ENCODE measurements at regions of chr6 and their contacts with region 1.

Region 1: GRCh38 chr6:63598049-63599036 is 26.1 kb downstream of the LOC128125822 start:
- DNase-seq: peak; percentile 69 to 80 (median 78)
- H3K4me3 ChIP-seq: peak overlapping the region; percentile 38 to 94 (median 73)
- H3K27ac ChIP-seq: no peak overlapping the region
- H3K4me1 ChIP-seq: peaks cover 6 to 10% (median 8%) of the 10 kb centered on the region in 4 experiments
- H3K27me3 ChIP-seq: no peaks in the 10 kb centered on the region

Region 2: DNA sequence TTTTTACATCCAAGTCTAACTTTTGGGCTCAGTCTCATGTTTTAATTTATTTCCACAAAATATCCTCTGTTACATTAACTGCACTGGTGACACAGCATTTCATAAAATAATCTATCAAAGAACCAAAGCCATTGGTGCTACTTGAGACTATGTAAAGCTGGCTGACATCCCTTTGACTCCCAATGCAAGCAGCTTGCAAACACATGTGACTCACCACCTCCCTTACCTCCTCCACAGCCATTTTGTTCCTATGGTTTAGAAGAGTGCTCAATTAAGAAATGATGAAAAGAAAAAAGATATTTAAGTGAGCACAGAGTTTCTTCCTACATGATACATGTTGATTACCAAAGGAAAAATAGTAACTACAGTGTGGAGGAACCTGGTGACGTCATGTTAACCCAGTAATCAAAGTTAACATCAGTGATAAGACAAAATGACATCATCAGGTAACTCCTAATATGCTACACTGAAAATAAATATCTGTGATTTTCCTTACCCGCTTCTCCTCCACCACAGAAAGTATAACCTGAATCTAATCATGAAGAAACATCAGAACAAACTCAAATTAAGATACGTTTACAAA is 225.3 kb before region 1 on chr6:
- CTCF ChIA-PET with region 1: no interaction called
- POLR2A ChIA-PET with region 1: no interaction called
- DNase-seq: no peak
- H3K4me3 ChIP-seq: no peak overlapping the region
- H3K27ac ChIP-seq: no peak overlapping the region
- H3K4me1 ChIP-seq: no peaks in the 10 kb centered on the region
- H3K27me3 ChIP-seq: no peaks in the 10 kb centered on the region

Region 3: GRCh38 chr6:63553208-63553607 is 45.1 kb before region 1 on chr6:
- CTCF ChIA-PET with region 1: no interaction called
- POLR2A ChIA-PET with region 1: no interaction called
- DNase-seq: no peak
- H3K4me3 ChIP-seq: no peak overlapping the region
- H3K27ac ChIP-seq: no peak overlapping the region
- H3K4me1 ChIP-seq: no peaks in the 10 kb centered on the region
- H3K27me3 ChIP-seq: no peaks in the 10 kb centered on the region

Region 4: GRCh38 chr6:63565058-63565726 is 33.2 kb before region 1 on chr6:
- CTCF ChIA-PET with region 1: no interaction called
- POLR2A ChIA-PET with region 1: no interaction called
- DNase-seq: no peak
- H3K4me3 ChIP-seq: no peak overlapping the region
- H3K27ac ChIP-seq: no peak overlapping the region
- H3K4me1 ChIP-seq: peaks cover 0 to 2% (median 0%) of the 10 kb centered on the region in 4 experiments
- H3K27me3 ChIP-seq: no peaks in the 10 kb centered on the region

Region 5: GRCh38 chr6:63635588-63636517 is 37.5 kb after region 1 on chr6 and contains the start of gene PHF3:
- CTCF ChIA-PET with region 1: interaction called, 13 read pairs
- POLR2A ChIA-PET with region 1: interaction called, 5 read pairs
- DNase-seq: peak; percentile 93 to 96 (median 96)
- H3K4me3 ChIP-seq: peak within 1 kb of the TSS; percentile 83 to 97 (median 94)
- H3K27ac ChIP-seq: peak within 1 kb of the TSS; percentile 96 to 98
- H3K4me1 ChIP-seq: peaks cover 3 to 40% (median 20%) of the 10 kb centered on the region in 4 experiments
- H3K27me3 ChIP-seq: no peaks in the 10 kb centered on the region

Region 6: DNA sequence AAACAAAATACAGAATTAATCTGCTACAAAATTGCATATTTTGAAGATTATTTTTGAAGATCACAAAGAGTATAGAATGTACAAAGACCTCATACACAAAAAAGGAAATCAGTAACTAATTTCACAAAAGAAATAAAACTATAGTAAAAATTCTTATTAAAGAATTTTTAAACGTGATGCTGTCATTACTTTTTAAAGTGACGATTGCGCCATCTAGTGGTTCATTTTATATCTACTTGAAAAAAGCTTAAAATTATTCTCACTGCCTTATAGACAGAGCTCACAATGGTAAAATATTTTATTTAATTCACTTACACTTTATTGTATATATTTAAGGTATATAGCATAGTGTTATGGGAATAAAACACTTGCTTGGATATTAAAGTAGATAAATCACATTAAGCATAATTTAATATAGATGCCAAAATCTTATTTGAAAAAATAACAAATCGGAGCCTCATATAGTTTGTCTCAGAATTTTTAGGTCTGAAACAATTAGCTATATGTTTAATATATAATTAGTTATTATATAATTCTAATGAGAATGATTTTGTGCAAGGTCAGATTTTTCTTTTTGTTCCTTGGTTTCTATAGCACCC is 166.1 kb after region 1 on chr6:
- CTCF ChIA-PET with region 1: interaction called, 16 read pairs
- POLR2A ChIA-PET with region 1: no interaction called
- DNase-seq: peak; percentile 46 to 76 (median 67)
- H3K4me3 ChIP-seq: no peak overlapping the region
- H3K27ac ChIP-seq: no peak overlapping the region
- H3K4me1 ChIP-seq: no peaks in the 10 kb centered on the region
- H3K27me3 ChIP-seq: no peaks in the 10 kb centered on the region

Region 7: GRCh38 chr6:63882224-63882623 is 283.9 kb after region 1 on chr6:
- CTCF ChIA-PET with region 1: no interaction called
- POLR2A ChIA-PET with region 1: no interaction called
- DNase-seq: peak in 1 of 3 donors; percentile 6
- H3K4me3 ChIP-seq: no peak overlapping the region
- H3K27ac ChIP-seq: no peak overlapping the region
- H3K4me1 ChIP-seq: peaks cover 0 to 6% (median under 1%) of the 10 kb centered on the region in 4 experiments
- H3K27me3 ChIP-seq: no peaks in the 10 kb centered on the region